Caco-2 (cell line): ENCODE measurements at regions of chr4 and their contacts with region 1.

Region 1: GRCh38 chr4:60724623-60725022 is 475.5 kb upstream of the ADGRL3 start:
- DNase-seq: peak; percentile 54 to 68
- H3K4me3 ChIP-seq: no peak overlapping the region
- H3K4me3 Mint-ChIP-seq: peak overlapping the region; percentile 60
- H3K27ac Mint-ChIP-seq: peak overlapping the region; percentile 93
- H3K4me1 ChIP-seq: peaks cover 59% of the 10 kb centered on the region
- H3K4me1 Mint-ChIP-seq: peaks cover 25% of the 10 kb centered on the region
- H3K27me3 ChIP-seq: no peaks in the 10 kb centered on the region
- H3K27me3 Mint-ChIP-seq: no peaks in the 10 kb centered on the region
- CTCF ChIP-seq: no peak

Region 2: DNA sequence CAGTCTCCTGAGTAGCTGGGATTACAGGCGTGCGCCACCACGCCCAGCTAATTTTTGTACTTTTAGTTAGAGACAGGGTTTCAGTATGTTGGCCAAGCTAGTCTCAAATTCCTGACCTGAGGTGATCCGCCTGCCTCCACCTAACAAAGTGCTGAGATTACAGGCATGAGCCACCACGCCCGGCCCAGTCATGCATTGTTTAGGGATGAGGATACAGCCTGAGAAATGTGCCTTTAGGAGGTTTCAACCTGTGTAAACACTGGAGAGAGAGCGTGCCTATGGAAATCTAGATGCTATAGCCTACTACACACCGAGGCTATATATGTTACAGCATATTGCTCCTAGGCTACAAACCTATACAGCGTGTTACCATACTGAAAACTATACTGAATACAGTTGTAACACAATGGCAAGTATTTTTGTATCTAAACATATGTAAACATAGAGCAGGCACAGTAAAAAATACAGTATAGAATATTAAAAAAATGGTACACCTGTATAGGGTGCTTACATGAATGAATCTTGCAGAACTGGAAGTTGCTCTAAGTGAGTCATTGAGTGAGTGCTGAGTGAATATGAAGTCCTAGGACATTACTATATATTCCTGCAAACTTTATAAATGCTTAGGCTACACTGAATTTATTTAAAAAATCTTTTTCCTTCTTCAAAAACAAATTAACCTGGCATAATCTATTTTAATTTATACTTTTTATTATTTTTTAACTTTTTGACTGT is 112.7 kb before region 1 on chr4:
- CTCF ChIA-PET with region 1: no interaction called
- POLR2A ChIA-PET with region 1: no interaction called
- intact Hi-C with region 1: loop called (anchors 2 kb)
- DNase-seq: peak; percentile 76 to 87
- H3K4me3 ChIP-seq: no peak overlapping the region
- H3K4me3 Mint-ChIP-seq: no peak overlapping the region
- H3K27ac Mint-ChIP-seq: peak overlapping the region; percentile 75
- H3K4me1 ChIP-seq: peaks cover 31% of the 10 kb centered on the region
- H3K4me1 Mint-ChIP-seq: peaks cover 25% of the 10 kb centered on the region
- H3K27me3 ChIP-seq: no peaks in the 10 kb centered on the region
- H3K27me3 Mint-ChIP-seq: no peaks in the 10 kb centered on the region
- CTCF ChIP-seq: no peak